Activated B cell treated with CpG ODN at 0.5 μM for 24 hours (primary cell): ENCODE measurements at regions of chr22 and their contacts with region 1.

Region 1: DNA sequence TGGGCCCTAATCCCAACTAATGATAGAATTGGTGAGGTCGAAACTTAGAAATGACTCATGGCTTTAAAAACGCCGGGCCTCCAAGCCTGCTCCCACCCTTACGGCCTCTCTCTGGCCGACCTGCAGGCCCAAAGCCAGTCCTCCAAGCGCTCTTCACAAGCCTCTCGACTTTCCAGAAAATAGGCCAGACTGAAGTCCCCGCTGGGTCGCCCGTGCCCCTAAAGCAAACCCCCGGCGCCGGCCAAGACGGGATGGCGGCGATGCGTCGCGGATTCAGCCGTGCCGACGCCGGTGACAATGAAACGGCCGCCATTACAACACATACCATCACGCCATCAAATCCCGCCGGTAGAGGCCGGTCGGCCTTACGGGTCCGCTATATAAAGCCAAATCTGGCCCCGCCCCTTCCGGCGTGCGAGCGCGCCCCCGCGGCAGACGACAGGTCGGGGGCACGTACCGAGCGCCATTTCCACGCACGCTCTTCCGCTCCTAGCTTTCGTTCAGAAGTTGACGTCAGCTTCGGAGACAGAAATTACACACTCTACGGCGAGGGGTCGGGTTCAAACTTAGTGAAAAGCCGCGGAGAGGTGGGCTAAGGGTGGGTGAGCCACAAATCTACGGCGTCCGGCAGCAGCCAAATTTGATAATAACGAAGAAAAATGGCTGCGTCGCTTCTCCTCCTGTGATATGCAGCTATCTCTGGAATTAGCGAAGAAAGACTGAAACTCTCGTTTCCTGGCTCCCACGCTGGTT is at the start of gene RPL3:
- DNase-seq: peak; percentile 99
- ATAC-seq: peak; percentile 87
- H3K4me3 Mint-ChIP-seq: peak within 1 kb of the TSS; percentile 100
- H3K27ac Mint-ChIP-seq: peak within 1 kb of the TSS; percentile 99
- H3K4me1 Mint-ChIP-seq: peaks cover 46% of the 10 kb centered on the region
- H3K27me3 Mint-ChIP-seq: peaks cover 2% of the 10 kb centered on the region
- CTCF ChIP-seq: no peak
- total RNA-seq, gene RPL3: 3,087 and 3,439 TPM in 2 replicates

Region 2: DNA sequence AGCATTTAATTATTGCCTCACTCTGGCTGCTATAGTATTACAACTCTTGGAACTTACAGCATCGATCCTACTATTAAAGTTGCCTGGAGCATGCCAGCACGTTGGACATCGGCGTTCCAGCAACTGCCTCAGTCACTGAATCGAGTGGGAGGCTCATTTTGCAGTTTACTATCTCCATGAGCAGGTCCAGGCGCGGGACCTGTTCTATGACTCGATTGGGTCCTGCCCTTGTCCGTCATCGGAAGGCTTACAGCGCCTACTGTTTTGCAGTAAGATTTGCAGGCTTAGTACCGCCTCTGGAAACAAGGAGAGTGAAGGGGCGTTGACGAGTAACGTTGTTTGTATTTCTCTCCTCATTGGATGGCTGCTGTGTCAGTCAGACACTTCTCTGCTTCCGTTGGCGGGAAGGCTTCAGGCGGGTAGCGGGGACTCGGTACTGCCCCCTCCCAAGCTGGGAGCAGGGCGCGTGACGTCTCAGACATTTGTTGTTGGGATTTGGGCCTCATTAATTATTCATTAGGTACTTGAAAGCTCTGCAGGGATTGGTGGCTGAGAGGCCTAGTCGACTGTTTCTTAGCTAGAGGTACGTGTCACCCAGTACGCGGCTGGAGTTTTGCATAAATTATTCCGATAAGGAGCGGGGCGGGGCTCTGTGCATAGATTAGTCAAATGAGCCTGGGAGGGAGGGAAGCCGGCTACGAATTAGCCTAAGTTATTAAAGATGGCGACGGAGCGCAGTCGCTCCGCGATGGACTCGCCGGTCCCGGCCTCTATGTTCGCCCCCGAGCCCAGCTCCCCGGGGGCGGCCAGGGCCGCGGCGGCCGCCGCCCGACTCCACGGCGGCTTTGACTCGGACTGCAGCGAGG is 614.0 kb before region 1 on chr22 and contains the start of gene GTPBP1:
- CTCF ChIA-PET with region 1: no interaction called
- POLR2A ChIA-PET with region 1: interaction called, 5 read pairs
- intact Hi-C with region 1: loop called (anchors 2 kb)
- DNase-seq: peak; percentile 82
- ATAC-seq: peak; percentile 79
- H3K4me3 Mint-ChIP-seq: peak within 1 kb of the TSS; percentile 88
- H3K27ac Mint-ChIP-seq: peak within 1 kb of the TSS; percentile 85
- H3K4me1 Mint-ChIP-seq: peaks cover 69% of the 10 kb centered on the region
- H3K27me3 Mint-ChIP-seq: no peaks in the 10 kb centered on the region
- CTCF ChIP-seq: no peak
- total RNA-seq, gene GTPBP1: 90.6 and 103 TPM in 2 replicates

Region 3: DNA sequence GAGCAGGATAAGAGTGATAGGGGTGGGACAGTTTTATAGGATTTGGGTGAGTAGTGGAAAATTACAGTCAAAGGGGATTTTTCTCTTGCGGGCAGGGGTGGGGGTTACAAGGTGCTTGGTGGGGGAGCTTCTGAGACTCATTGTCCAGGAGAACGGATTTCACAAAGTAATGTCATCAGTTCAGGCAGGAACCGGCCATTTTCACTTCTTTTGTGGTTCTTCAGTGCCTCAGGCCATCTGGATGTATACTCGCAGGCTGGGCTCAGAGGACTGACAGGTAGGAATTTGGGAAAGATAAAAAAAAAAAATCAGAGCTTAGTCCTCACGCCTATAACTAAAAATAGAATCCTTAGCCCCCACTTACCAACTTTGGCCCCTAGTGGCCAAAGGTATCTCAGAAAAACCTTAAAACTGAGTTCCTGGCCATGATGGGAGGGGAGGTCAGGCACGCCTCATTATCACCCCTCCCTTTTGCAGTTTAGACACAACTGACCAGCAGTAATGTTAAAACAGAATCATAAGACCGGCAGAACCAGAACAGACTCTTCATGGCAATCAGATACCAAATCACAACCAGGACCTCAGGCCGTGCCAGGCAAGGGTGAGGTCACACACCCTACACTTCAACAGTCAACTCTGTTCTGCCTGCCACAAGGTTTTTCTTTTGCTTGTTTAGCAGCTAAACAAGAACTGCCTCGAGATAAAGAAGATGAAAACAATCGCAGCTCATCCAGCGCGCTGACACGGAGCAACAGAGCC is 251.2 kb before region 1 on chr22:
- CTCF ChIA-PET with region 1: no interaction called
- POLR2A ChIA-PET with region 1: interaction called, 21 read pairs
- intact Hi-C with region 1: loop called (anchors 1 kb)
- DNase-seq: no peak
- ATAC-seq: no peak
- H3K4me3 Mint-ChIP-seq: no peak overlapping the region
- H3K27ac Mint-ChIP-seq: no peak overlapping the region
- H3K4me1 Mint-ChIP-seq: peaks cover 54% of the 10 kb centered on the region
- H3K27me3 Mint-ChIP-seq: no peaks in the 10 kb centered on the region
- CTCF ChIP-seq: no peak

Region 4: DNA sequence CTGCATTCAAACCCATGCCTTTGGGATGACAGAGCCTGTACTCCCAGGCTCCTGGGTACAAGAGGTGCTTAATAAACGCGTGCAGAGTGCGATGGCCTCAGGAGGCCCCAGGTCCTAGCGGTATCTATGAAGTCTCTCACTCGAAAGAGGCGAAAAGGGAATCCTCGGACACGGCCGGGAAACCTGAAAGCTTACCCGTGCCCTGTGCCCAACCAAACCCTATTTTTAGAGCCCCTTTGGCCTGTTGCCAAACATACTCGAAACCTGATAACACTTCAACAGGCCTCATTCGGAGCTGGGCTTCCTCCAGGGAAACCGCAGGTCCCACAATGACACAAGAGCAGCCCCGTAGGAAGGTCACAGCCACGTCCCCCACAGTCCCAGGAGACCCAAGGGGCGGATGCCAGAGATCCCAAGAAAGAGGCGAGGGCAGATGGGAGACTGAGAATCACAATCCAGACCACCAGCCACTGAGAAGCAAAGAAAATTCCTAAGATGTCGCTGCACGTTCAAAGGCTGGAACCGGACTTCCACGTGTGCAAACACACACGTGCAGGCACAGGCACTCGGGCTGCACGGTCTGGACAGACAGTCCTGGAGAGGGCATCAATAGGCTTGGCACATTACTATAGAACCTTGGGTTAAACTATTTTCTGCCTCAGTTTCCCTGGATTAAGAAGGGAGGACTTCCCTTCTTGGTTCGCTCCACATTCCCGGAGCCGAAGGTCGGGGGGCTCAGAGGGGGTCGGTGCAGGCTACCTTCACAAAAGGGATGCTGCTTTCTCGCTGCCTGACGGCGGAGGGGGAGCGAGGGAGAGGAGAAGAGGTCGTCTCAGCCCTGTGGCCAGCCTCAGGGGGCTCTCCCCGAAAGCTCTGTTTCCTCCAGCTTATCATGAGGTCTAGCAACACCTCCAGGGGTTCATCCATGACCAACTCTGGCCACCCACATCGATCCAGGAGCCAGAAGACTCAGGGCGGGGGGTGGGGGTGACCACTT is 82.8 kb before region 1 on chr22:
- CTCF ChIA-PET with region 1: no interaction called
- POLR2A ChIA-PET with region 1: interaction called, 10 read pairs
- intact Hi-C with region 1: no loop called
- DNase-seq: no peak
- ATAC-seq: peak; percentile 83
- H3K4me3 Mint-ChIP-seq: peak overlapping the region; percentile 50
- H3K27ac Mint-ChIP-seq: no peak overlapping the region
- H3K4me1 Mint-ChIP-seq: peaks cover 36% of the 10 kb centered on the region
- H3K27me3 Mint-ChIP-seq: peaks cover 73% of the 10 kb centered on the region
- CTCF ChIP-seq: no peak

Region 5: DNA sequence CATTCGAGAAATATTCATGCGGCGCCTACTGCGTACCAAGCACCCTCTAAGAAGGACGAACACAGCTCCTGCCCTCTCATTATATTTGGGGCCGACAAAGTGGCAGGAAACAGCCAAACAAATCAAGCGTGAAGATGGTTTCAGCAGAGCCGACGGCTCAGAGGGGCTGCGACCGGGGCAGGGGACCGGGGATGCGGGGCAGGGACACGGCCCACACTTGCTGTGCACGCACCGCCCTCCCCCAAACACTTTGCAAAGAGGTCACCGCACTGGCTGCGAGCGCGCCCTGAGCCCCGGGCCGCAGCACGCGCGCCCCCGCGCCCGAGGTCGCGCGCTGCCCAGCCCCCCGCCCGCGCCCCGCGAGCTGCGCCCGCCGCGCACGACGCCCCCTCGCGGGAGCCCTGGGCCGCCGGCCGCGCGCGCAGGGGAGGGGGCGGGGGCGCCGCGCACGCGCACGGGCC is 30.1 kb after region 1 on chr22:
- CTCF ChIA-PET with region 1: interaction called, 3 read pairs
- POLR2A ChIA-PET with region 1: interaction called, 94 read pairs
- intact Hi-C with region 1: loop called (anchors 1 kb)
- DNase-seq: peak; percentile 47
- ATAC-seq: peak; percentile 9
- H3K4me3 Mint-ChIP-seq: peak overlapping the region; percentile 87
- H3K27ac Mint-ChIP-seq: peak overlapping the region; percentile 87
- H3K4me1 Mint-ChIP-seq: peaks cover 40% of the 10 kb centered on the region
- H3K27me3 Mint-ChIP-seq: peaks cover 2% of the 10 kb centered on the region
- CTCF ChIP-seq: no peak

Region 6: DNA sequence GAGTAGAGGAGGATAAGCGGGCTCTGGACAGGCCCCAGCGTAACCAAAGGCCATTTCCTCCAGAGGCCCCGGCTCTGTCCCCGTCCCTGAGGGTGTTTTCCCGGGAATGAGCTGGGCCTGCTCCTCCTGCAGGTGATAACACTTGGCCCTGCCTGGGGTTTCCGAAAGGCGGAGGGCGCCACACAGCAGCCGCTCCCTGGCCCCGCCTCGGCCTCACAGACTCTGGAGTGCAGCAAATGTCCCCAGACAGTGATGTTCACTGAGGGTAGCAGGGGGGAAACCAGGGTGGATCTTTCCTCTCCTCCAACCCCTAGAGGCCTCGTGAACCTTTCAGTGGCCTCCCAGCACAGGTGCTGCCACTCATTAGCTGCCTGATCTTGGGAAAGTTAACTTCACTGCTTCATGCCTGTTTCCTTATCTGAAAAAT is 126.9 kb after region 1 on chr22:
- CTCF ChIA-PET with region 1: no interaction called
- POLR2A ChIA-PET with region 1: interaction called, 30 read pairs
- intact Hi-C with region 1: no loop called
- DNase-seq: peak; percentile 51
- ATAC-seq: peak; percentile 61
- H3K4me3 Mint-ChIP-seq: peak overlapping the region; percentile 86
- H3K27ac Mint-ChIP-seq: peak overlapping the region; percentile 90
- H3K4me1 Mint-ChIP-seq: peaks cover 90% of the 10 kb centered on the region
- H3K27me3 Mint-ChIP-seq: no peaks in the 10 kb centered on the region
- CTCF ChIP-seq: no peak

Region 7: GRCh38 chr22:39532215-39533071 is 213.0 kb after region 1 on chr22 and contains the start of gene RPS19BP1:
- CTCF ChIA-PET with region 1: interaction called, 33 read pairs
- POLR2A ChIA-PET with region 1: interaction called, 89 read pairs
- intact Hi-C with region 1: loop called (anchors 1 kb)
- DNase-seq: peak; percentile 94
- ATAC-seq: peak; percentile 85
- H3K4me3 Mint-ChIP-seq: peak within 1 kb of the TSS; percentile 96
- H3K27ac Mint-ChIP-seq: peak within 1 kb of the TSS; percentile 94
- H3K4me1 Mint-ChIP-seq: peaks cover 56% of the 10 kb centered on the region
- H3K27me3 Mint-ChIP-seq: no peaks in the 10 kb centered on the region
- CTCF ChIP-seq: no peak
- total RNA-seq, gene RPS19BP1: 67.7 and 79.0 TPM in 2 replicates